ENCODE measurements at regions of chr22 and their contacts with region 1.

Region 1: DNA sequence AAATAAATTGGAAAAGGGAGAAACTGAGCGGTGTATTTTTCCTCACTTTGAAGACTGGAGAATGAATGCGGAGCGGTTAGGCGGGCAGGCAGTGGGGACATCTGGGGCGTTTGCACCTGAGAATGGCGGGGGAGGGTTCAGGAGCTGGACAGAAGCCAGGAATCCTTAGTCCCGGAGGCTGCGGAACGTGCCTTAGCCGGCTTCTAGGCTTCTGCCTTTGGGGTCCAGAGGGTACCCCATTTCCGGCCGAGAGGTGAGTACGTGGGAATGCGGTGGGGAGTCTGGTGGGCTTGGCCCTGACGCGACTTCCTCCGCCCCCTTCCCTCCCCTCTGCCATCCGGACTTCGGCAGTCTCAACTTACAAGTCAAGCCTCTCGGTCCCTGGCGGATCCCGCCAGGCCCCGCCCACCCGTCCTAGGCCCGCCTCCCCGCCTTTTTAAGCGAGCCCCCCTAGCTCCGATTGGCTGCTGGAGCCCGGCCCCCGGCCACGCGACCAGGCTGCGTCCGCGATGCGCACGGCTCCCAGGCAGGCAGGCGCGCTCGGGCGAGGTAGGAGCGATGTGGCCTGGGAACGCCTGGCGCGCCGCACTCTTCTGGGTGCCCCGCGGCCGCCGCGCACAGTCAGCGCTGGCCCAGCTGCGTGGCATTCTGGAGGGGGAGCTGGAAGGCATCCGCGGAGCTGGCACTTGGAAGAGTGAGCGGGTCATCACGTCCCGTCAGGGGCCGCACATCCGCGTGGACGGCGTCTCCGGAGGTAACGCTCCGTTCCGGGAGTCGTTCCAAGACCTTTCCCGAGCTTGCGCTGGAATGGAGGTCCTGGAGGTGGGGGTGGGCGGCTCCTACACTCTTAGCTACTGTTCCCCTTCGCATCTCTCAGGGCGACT is at the start of gene GCAT:
- DNase-seq: peak; percentile 91
- ATAC-seq: peak; percentile 79
- H3K4me3 ChIP-seq: peak within 1 kb of the TSS; percentile 78 to 95 (median 93)
- H3K27ac ChIP-seq: peak within 1 kb of the TSS; percentile 77
- H3K4me1 ChIP-seq: peaks cover 33% of the 10 kb centered on the region
- H3K27me3 ChIP-seq: no peaks in the 10 kb centered on the region; a peak in 1 of 5 replicates
- CTCF ChIP-seq: peak; percentile 5; the same call in 1 of the 2 replicates
- EP300 ChIP-seq: no peak
- POLR2A ChIP-seq: peak; percentile 77 to 81
- RAD21 ChIP-seq: peak; percentile 43
- total RNA-seq, gene GCAT: 50.3 and 56.8 TPM in 2 replicates

Region 2: GRCh38 chr22:37633625-37634416 is 173.8 kb before region 1 on chr22:
- CTCF ChIA-PET with region 1: no interaction called
- POLR2A ChIA-PET with region 1: interaction called, 17 read pairs
- in situ Hi-C with region 1: no loop called
- intact Hi-C with region 1: no loop called
- DNase-seq: peak; percentile 85
- ATAC-seq: peak; percentile 67
- H3K4me3 ChIP-seq: peak overlapping the region; percentile 31 to 69 (median 51); a peak in 5 of 6 replicates
- H3K27ac ChIP-seq: peak overlapping the region; percentile 84
- H3K4me1 ChIP-seq: peaks cover 84% of the 10 kb centered on the region
- H3K27me3 ChIP-seq: no peaks in the 10 kb centered on the region
- CTCF ChIP-seq: peak; percentile 70
- EP300 ChIP-seq: peak in 1 of 2 experiments; percentile 4; a peak in 1 of 4 replicates
- POLR2A ChIP-seq: peak; percentile 51 to 76
- RAD21 ChIP-seq: 0 out of 2 replicates have a peak, but pooled peaks have one; percentile 15

Region 3: DNA sequence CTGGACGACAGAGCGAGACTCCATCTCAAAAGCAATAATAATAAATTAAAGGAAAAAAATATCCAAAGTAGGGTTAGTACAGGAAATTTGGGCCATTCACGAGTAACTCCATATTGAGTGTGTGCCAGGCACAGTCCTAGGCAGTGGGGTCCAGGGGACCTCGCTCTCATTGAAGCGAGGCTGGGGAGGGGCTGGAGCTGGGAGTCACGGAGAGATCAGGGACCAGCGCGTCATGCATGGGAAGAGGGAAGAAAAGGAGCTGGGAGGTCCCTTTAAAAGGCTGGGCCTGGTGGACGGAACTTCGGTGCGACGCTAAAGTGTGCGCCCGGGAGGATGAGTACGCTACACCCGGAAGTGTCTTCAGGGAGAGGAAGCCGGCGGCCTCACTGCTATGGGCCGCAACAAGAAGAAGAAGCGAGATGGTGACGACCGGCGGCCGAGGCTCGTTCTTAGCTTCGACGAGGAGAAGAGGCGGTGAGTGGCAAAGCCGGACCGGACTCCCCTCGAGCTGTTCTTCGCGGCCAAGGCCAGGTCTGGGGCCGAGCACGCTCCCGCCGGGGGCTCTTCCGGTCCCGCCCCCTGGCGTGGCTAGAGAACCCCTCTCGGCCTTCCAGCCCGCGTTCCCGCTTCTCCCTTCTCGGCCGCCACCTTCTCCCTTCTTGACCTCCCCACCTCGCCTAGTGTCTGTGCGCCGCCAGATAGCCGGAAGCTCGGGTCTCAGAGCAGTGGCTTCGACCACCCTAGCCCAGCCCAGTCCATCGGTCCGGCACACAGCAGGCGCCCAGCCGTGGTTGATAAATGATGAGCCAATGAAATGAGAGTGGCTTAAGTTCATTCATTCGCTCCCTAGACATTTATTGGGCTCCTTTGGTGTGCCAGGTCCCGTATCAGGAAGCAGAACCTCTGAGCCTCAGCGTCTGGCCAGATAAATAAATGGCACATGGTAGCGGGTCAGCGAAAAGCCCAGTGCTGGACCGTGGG is 121.4 kb before region 1 on chr22 and contains the start of gene NOL12:
- CTCF ChIA-PET with region 1: no interaction called
- POLR2A ChIA-PET with region 1: interaction called, 11 read pairs
- in situ Hi-C with region 1: no loop called
- intact Hi-C with region 1: no loop called
- DNase-seq: peak; percentile 78
- ATAC-seq: peak; percentile 79
- H3K4me3 ChIP-seq: peak within 1 kb of the TSS; percentile 85 to 96 (median 93)
- H3K27ac ChIP-seq: peak within 1 kb of the TSS; percentile 82
- H3K4me1 ChIP-seq: peaks cover 41% of the 10 kb centered on the region
- H3K27me3 ChIP-seq: no peaks in the 10 kb centered on the region
- CTCF ChIP-seq: no peak
- EP300 ChIP-seq: 0 out of 4 replicates have a peak, but pooled peaks of 1 of the 2 experiments have one; percentile 24
- POLR2A ChIP-seq: peak; percentile 52 to 76; a peak in 3 of 4 replicates
- RAD21 ChIP-seq: peak; percentile 34
- total RNA-seq, gene NOL12: 27.5 and 31.4 TPM in 2 replicates

Region 4: DNA sequence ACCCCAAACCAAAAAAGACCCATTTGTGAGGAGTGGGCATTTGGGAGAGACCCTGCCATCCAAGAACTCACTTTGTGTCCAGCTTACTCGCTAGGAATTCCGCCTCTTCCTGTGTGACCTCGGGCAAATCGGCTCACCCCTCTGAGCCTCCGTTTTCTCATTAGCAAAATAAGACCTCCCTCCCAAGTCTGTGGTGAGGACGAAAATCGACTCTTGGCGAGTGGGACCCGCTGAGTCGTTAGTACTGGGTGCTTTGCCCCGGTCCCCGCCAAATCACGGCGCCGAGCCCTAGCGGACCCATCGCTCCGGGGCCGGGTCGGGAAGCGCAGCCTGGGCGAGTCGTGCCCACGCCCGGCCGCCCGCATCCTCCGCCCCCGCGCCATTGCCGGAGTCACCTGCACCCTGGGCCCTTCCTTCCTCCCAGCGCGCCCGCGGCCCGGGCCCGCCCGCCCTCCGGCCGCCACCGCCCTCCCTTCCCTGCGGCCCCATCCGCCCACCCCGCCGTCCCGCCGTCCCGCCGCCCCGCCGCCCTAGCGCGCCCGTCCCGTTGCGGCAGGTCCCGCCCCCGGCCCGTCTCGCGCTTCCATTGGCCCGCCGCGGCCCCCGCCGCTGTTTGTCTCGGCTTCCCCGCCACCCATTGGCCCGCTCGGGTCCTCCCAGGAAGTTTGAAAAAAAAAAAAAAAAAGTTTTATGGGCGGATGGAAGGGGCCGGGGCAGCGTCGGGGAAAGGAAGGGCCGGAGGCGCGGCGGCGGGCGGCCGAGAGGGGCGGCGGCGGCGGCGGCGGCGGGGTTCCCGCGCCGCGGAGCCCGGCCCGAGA is 61.9 kb before region 1 on chr22:
- CTCF ChIA-PET with region 1: no interaction called
- POLR2A ChIA-PET with region 1: interaction called, 6 read pairs
- in situ Hi-C with region 1: no loop called
- intact Hi-C with region 1: loop called (anchors 5 kb)
- DNase-seq: peak; percentile 80
- ATAC-seq: peak; percentile 75
- H3K4me3 ChIP-seq: peak overlapping the region; percentile 82 to 98 (median 84)
- H3K27ac ChIP-seq: peak overlapping the region; percentile 67
- H3K4me1 ChIP-seq: peaks cover 65% of the 10 kb centered on the region
- H3K27me3 ChIP-seq: no peaks in the 10 kb centered on the region
- CTCF ChIP-seq: no peak
- EP300 ChIP-seq: no peak
- POLR2A ChIP-seq: no peak; a peak in 2 of 4 replicates
- RAD21 ChIP-seq: no peak

Region 5: DNA sequence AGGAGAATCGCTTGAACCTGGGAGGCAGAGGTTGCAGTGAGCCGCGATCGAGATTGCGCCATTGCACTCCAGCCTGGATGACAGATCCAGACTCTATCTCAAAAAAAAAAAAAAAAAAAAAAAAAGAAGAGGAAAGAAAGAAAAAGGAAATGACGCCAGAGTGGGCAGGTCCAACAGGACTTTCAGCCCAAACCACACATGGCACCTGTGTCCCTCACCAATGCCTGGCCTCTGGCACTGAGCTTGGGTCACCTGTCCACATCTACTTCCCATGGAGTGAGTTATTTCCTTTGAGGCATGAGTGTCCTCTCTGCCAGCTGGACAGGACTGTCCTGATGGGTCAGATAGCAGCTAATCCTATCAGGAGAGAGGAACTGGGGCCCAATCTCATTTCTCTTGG is 15.2 kb before region 1 on chr22:
- CTCF ChIA-PET with region 1: no interaction called
- POLR2A ChIA-PET with region 1: interaction called, 11 read pairs
- in situ Hi-C with region 1: no loop called
- intact Hi-C with region 1: no loop called
- DNase-seq: no peak
- ATAC-seq: peak; percentile 40; the same call in 2 of the 3 replicates
- H3K4me3 ChIP-seq: no peak overlapping the region
- H3K27ac ChIP-seq: no peak overlapping the region
- H3K4me1 ChIP-seq: peaks cover 45% of the 10 kb centered on the region
- H3K27me3 ChIP-seq: no peaks in the 10 kb centered on the region
- CTCF ChIP-seq: no peak
- EP300 ChIP-seq: no peak
- POLR2A ChIP-seq: no peak
- RAD21 ChIP-seq: no peak

Region 6: DNA sequence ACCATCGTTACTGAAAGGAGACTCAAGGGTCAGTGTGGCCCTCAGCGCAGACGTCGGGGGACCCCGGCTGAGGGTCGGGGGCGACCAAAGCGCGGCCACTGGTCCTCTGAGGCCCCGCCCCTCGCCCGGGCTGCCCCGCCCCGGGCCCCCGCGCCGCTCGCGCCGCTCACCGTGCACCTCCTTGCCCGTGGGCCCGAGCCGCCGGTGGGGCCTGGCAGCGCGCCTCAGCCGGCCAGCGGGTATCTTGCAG is 36.0 kb after region 1 on chr22:
- CTCF ChIA-PET with region 1: no interaction called
- POLR2A ChIA-PET with region 1: interaction called, 27 read pairs
- in situ Hi-C with region 1: no loop called
- intact Hi-C with region 1: no loop called
- DNase-seq: no peak
- ATAC-seq: peak; percentile 62
- H3K4me3 ChIP-seq: peak overlapping the region; percentile 84 to 91 (median 87)
- H3K27ac ChIP-seq: peak overlapping the region; percentile 85
- H3K4me1 ChIP-seq: peaks cover 41% of the 10 kb centered on the region
- H3K27me3 ChIP-seq: no peaks in the 10 kb centered on the region
- CTCF ChIP-seq: no peak
- EP300 ChIP-seq: no peak
- POLR2A ChIP-seq: no peak; a peak in 1 of 4 replicates
- RAD21 ChIP-seq: no peak

Region 7: DNA sequence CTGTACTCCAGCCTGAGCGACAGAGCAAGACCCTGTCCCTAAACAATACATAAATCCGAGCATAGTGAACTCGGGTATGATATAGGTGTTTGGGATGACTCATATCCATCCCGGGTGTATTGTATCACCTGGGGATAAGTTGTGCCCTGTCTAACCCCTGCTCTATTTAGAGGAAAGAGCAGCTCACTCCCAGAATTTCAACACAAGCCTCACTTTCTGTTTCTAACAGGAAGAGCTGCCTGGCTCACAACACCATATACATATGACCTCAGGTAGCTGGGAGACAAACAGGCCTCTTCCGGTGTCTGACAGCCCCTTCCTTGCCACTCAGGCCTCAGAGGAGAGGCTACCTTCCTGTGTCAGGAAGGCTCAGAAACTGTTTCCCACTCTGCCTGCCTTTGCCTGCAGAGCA is 88.5 kb after region 1 on chr22:
- CTCF ChIA-PET with region 1: no interaction called
- POLR2A ChIA-PET with region 1: interaction called, 23 read pairs
- in situ Hi-C with region 1: no loop called
- intact Hi-C with region 1: no loop called
- DNase-seq: peak; percentile 90
- ATAC-seq: peak; percentile 80
- H3K4me3 ChIP-seq: peak overlapping the region; percentile 19 to 47 (median 28); a peak in 5 of 6 replicates
- H3K27ac ChIP-seq: peak overlapping the region; percentile 80
- H3K4me1 ChIP-seq: peaks cover 82% of the 10 kb centered on the region
- H3K27me3 ChIP-seq: no peaks in the 10 kb centered on the region
- CTCF ChIP-seq: no peak
- EP300 ChIP-seq: 0 out of 4 replicates have a peak, but pooled peaks of 1 of the 2 experiments have one; percentile 16
- POLR2A ChIP-seq: no peak
- RAD21 ChIP-seq: no peak

Region 8: GRCh38 chr22:38143036-38143697 is 335.5 kb after region 1 on chr22:
- CTCF ChIA-PET with region 1: no interaction called
- POLR2A ChIA-PET with region 1: no interaction called
- in situ Hi-C with region 1: no loop called
- intact Hi-C with region 1: no loop called
- DNase-seq: no peak
- ATAC-seq: no peak
- H3K4me3 ChIP-seq: no peak overlapping the region
- H3K27ac ChIP-seq: no peak overlapping the region
- H3K4me1 ChIP-seq: no peaks in the 10 kb centered on the region; the same call in 1 of the 2 replicates
- H3K27me3 ChIP-seq: no peaks in the 10 kb centered on the region
- CTCF ChIP-seq: no peak
- EP300 ChIP-seq: no peak
- POLR2A ChIP-seq: no peak
- RAD21 ChIP-seq: no peak